ENCODE measurements at regions of chr10 and their contacts with region 1.

Region 1: GRCh38 chr10:32298054-32298812 is 48.7 kb downstream of the EPC1 start:
- DNase-seq: no peak
- H3K4me3 Mint-ChIP-seq: peak overlapping the region; percentile 15
- H3K27ac Mint-ChIP-seq: peak overlapping the region; percentile 67
- H3K4me1 Mint-ChIP-seq: peaks cover 31% of the 10 kb centered on the region
- H3K27me3 Mint-ChIP-seq: no peaks in the 10 kb centered on the region

Region 2: GRCh38 chr10:32077896-32078485 is 220.2 kb before region 1 on chr10:
- intact Hi-C with region 1: no loop called
- DNase-seq: no peak
- H3K4me3 Mint-ChIP-seq: no peak overlapping the region
- H3K27ac Mint-ChIP-seq: no peak overlapping the region
- H3K4me1 Mint-ChIP-seq: no peaks in the 10 kb centered on the region
- H3K27me3 Mint-ChIP-seq: peaks cover 8% of the 10 kb centered on the region

Region 3: GRCh38 chr10:32256613-32257437 is 41.4 kb before region 1 on chr10:
- intact Hi-C with region 1: loop called (anchors 5 kb)
- DNase-seq: peak; percentile 48
- H3K4me3 Mint-ChIP-seq: no peak overlapping the region
- H3K27ac Mint-ChIP-seq: peak overlapping the region; percentile 66
- H3K4me1 Mint-ChIP-seq: peaks cover 17% of the 10 kb centered on the region
- H3K27me3 Mint-ChIP-seq: no peaks in the 10 kb centered on the region

Region 4: DNA sequence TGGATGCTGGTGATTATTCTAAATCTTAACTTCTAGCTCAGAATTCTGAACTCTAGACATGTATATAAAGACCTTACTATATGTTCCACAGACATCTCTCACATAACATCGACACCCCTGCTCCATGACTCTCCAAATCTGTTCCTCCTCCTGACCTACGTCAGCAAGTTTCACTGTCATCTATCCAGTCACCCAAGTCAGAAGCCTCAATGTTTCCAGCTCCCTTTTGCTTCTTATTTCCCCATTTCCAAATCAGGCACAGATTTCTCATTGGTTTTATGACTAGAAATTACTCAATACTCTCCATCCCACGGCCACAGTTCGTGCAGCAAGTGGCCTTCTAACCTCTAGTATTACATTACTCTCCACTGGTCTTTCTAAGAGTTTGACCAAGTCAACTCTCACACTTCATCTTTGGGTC is 20.3 kb after region 1 on chr10:
- intact Hi-C with region 1: loop called (anchors 2 kb)
- DNase-seq: no peak
- H3K4me3 Mint-ChIP-seq: peak overlapping the region; percentile 5
- H3K27ac Mint-ChIP-seq: peak overlapping the region; percentile 69
- H3K4me1 Mint-ChIP-seq: peaks cover 57% of the 10 kb centered on the region
- H3K27me3 Mint-ChIP-seq: no peaks in the 10 kb centered on the region

Measured in activated T-helper 1 cell treated with anti-CD3 and anti-CD28 coated beads, Interleukin-12 subunit alpha, Interleukin-12 subunit beta, Interleukin-2, Interleukin-4 antibody, amounts not matched to agents 30 ng/mL and 10 ng/mL and 1 ng/mL, durations not matched to agents 14 hours and 24 hours and 36 hours (primary cell).